GM18951 (cell line): ENCODE measurements at regions of chr19 and their contacts with region 1.

Region 1: DNA sequence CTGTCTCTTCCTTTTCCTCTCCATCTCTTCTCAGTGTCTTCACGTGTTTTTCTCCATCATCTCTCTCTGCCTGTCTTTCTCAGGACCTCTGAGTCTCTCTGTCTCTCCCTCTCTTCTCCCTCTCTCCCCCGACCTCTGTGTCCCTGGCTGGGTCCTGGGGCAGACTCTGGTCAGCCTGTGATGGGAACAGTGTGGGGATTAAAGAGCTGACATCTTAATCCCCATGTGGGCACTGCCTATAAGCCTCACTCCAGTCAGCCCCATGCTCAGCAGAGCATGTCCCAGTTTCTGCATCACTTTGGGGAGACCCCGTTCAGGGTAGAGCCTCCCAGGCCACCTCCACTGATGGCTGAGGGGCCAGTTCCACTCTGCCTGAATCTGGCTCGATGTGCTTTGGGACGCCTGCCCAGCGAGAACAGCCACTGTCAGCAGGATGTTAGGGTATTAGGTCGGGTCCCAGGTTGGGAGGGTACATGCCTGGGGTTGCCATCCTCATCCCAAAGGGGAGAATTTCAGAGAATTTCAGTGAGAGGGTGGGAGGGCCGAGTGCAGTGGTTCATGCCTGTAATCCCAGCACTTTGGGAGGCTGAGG is 16.3 kb downstream of the EGLN2 start:
- POLR2A ChIP-seq: no peak

Region 2: GRCh38 chr19:40674291-40674690 is 141.0 kb before region 1 on chr19:
- in situ Hi-C with region 1: loop called (anchors 5 kb)
- POLR2A ChIP-seq: no peak